ENCODE measurements at regions of chr18 and their contacts with region 1.

Region 1: DNA sequence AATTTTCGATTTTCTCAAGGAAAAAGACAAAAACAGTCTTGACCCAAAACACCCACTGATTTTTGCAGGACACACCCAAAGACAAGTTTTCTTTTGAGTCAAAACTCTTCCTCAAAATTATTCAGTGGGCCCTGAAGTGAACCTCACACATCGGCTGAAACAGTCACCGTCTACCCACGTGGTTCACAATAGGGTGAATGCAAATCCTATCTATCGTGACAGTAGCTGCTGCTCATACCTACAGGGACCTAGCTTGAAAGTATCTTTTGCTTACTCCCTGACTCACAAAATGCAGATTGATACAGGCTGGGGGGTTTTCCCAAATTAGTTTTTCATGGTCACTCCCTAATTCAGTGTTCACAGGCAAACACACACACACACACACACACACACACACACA is 10.7 kb upstream of the CD226 start:
- DNase-seq: peak in 1 of 5 donors; percentile 71
- H3K4me3 ChIP-seq: no peak overlapping the region
- H3K4me3 Mint-ChIP-seq: peak overlapping the region in 1 of 8 donors; percentile 17
- H3K27ac ChIP-seq: peak overlapping the region; percentile 76
- H3K27ac Mint-ChIP-seq: no peak overlapping the region
- H3K4me1 ChIP-seq: peaks cover 49% of the 10 kb centered on the region
- H3K4me1 Mint-ChIP-seq: peaks cover 1 to 20% (median 16%) of the 10 kb centered on the region in 4 donors
- H3K27me3 ChIP-seq: no peaks in the 10 kb centered on the region
- H3K27me3 Mint-ChIP-seq: no peaks in the 10 kb centered on the region

Region 2: GRCh38 chr18:69636529-69637301 is 321.7 kb before region 1 on chr18:
- CTCF ChIA-PET with region 1: interaction called, 4 read pairs
- POLR2A ChIA-PET with region 1: no interaction called
- intact Hi-C with region 1: loop called (anchors 2 kb)
- DNase-seq: peak in 4 of 5 donors; percentile 12 to 24 (median 20)
- H3K4me3 ChIP-seq: no peak overlapping the region
- H3K4me3 Mint-ChIP-seq: no peak overlapping the region
- H3K27ac ChIP-seq: no peak overlapping the region
- H3K27ac Mint-ChIP-seq: no peak overlapping the region
- H3K4me1 ChIP-seq: no peaks in the 10 kb centered on the region
- H3K4me1 Mint-ChIP-seq: peaks cover 0 to 5% (median 2%) of the 10 kb centered on the region in 4 donors
- H3K27me3 ChIP-seq: peaks cover under 1% of the 10 kb centered on the region
- H3K27me3 Mint-ChIP-seq: peaks cover 3 to 4% of the 10 kb centered on the region in 2 donors

Region 3: DNA sequence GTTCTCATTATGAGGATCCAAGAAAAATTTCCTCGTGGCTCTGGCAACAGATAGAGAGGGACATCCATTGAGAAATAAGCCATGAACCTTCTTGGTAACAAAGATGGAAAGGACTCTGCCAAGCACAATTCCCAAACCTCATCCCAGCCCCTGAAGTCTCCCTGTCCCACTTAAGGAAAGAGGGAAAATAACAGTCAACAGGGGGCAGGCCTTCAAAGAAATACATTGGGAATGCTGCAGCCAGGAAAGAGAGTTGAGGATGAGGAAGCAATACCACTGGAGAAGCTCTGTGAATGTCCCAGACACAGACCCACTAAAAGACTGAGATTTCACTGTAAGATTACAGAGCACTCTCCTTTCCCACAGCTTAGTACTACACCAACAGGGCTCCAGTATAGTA is 104.0 kb before region 1 on chr18:
- CTCF ChIA-PET with region 1: interaction called, 10 read pairs
- POLR2A ChIA-PET with region 1: interaction called, 3 read pairs
- intact Hi-C with region 1: loop called (anchors 2 kb)
- DNase-seq: no peak
- H3K4me3 ChIP-seq: no peak overlapping the region
- H3K4me3 Mint-ChIP-seq: no peak overlapping the region
- H3K27ac ChIP-seq: no peak overlapping the region
- H3K27ac Mint-ChIP-seq: peak overlapping the region in 3 of 7 donors; percentile 19 to 58 (median 54)
- H3K4me1 ChIP-seq: no peaks in the 10 kb centered on the region
- H3K4me1 Mint-ChIP-seq: peaks cover 0 to 10% (median 2%) of the 10 kb centered on the region in 4 donors
- H3K27me3 ChIP-seq: no peaks in the 10 kb centered on the region
- H3K27me3 Mint-ChIP-seq: no peaks in the 10 kb centered on the region

Region 4: GRCh38 chr18:69916412-69916811 is 42.0 kb before region 1 on chr18:
- CTCF ChIA-PET with region 1: interaction called, 13 read pairs
- POLR2A ChIA-PET with region 1: interaction called, 11 read pairs
- intact Hi-C with region 1: no loop called
- DNase-seq: no peak
- H3K4me3 ChIP-seq: no peak overlapping the region
- H3K4me3 Mint-ChIP-seq: peak overlapping the region in 2 of 8 donors; percentile 9 to 42
- H3K27ac ChIP-seq: no peak overlapping the region
- H3K27ac Mint-ChIP-seq: peak overlapping the region in 6 of 7 donors; percentile 16 to 69 (median 46)
- H3K4me1 ChIP-seq: peaks cover 63% of the 10 kb centered on the region
- H3K4me1 Mint-ChIP-seq: peaks cover 55 to 91% (median 73%) of the 10 kb centered on the region in 4 donors
- H3K27me3 ChIP-seq: no peaks in the 10 kb centered on the region
- H3K27me3 Mint-ChIP-seq: no peaks in the 10 kb centered on the region

Region 5: GRCh38 chr18:69947361-69948133 is 10.9 kb before region 1 on chr18 and contains the start of gene CD226:
- CTCF ChIA-PET with region 1: interaction called, 56 read pairs
- POLR2A ChIA-PET with region 1: interaction called, 168 read pairs
- intact Hi-C with region 1: loop called (anchors 1 kb)
- DNase-seq: peak; percentile 61 to 68 (median 64)
- H3K4me3 ChIP-seq: peak within 1 kb of the TSS; percentile 63 to 71
- H3K4me3 Mint-ChIP-seq: peak within 1 kb of the TSS in 2 of 8 donors; percentile 86 to 91
- H3K27ac ChIP-seq: peak within 1 kb of the TSS; percentile 60
- H3K27ac Mint-ChIP-seq: no peak within 1 kb of the TSS
- H3K4me1 ChIP-seq: peaks cover 98% of the 10 kb centered on the region
- H3K4me1 Mint-ChIP-seq: peaks cover 9 to 45% (median 28%) of the 10 kb centered on the region in 4 donors
- H3K27me3 ChIP-seq: no peaks in the 10 kb centered on the region
- H3K27me3 Mint-ChIP-seq: no peaks in the 10 kb centered on the region
- total RNA-seq, gene CD226: 94.6 to 95.7 TPM